Activated CD8-positive, alpha-beta T cell treated with anti-CD3 and anti-CD28 coated beads, Interleukin-2, amount 10 ng/mL, durations not matched to agents 7 days and 5 days (primary cell): ENCODE measurements at regions of chr1 and their contacts with region 1.

Region 1: DNA sequence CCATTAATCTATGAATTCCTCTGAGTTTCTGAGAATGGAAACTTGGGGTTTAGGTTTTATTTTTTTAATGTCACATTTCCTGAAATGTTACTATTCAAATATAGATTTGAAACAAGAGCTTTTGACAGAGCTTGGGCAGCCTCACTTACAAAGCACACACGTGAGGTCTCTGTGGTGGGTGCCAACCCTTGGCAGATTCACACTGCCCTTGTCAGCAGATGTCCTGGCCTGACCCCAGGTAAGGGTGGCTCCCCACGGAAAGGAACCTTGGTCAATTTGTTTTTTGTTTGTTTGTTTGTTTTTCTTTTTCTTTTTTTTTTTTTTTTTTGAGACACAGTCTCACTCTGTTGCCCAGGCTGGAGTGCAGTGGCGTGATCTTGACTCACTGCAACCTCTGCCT is 53.5 kb downstream of the FAAP20 start:
- DNase-seq: no peak
- ATAC-seq: no peak
- H3K4me3 Mint-ChIP-seq: no peak overlapping the region
- H3K27ac Mint-ChIP-seq: no peak overlapping the region
- H3K4me1 Mint-ChIP-seq: peaks cover 32% of the 10 kb centered on the region
- H3K27me3 Mint-ChIP-seq: no peaks in the 10 kb centered on the region

Region 2: DNA sequence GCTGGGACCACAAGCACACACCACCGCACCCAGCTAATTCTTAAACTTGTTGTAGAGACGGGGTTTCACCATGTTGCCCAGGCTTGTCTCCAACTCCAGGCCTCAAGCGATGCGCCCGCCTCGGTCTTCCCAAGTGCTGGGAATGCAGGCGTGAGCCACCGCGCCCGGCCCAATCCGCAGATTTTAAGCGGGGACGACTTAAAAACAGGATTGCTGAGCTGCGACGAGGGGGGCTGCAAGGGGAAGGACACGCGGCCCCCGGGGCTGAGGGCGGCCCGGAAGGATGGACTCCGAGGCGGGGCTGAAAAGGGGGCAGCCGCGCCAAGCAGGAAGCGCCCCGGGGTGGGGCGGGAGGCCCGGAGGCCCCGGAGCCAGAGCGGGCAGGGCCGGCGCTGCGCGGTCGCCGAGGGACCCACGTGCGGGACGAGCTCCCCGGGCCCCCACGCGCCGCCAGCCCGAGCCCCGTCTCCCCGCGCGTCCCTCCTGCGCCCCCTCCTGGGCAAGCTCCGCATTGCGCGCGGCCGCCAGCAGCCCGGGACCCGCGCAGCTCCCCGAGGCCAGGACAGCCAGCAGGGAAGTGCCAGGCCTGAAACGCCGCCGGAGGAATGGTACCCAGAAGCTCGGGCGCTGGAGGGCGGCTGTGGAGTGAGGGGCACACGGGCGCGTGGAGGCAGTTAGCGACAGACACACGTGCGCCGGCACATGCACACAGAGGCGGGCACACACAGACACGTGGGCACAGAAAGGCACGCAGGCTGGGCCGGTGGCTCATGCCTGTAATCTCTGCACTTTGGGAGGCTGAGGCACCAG is 96.3 kb before region 1 on chr1:
- CTCF ChIA-PET with region 1: no interaction called
- POLR2A ChIA-PET with region 1: no interaction called
- DNase-seq: peak; percentile 77
- ATAC-seq: peak; percentile 87
- H3K4me3 Mint-ChIP-seq: peak overlapping the region; percentile 42
- H3K27ac Mint-ChIP-seq: no peak overlapping the region
- H3K4me1 Mint-ChIP-seq: peaks cover 24% of the 10 kb centered on the region
- H3K27me3 Mint-ChIP-seq: peaks cover 12% of the 10 kb centered on the region

Region 3: DNA sequence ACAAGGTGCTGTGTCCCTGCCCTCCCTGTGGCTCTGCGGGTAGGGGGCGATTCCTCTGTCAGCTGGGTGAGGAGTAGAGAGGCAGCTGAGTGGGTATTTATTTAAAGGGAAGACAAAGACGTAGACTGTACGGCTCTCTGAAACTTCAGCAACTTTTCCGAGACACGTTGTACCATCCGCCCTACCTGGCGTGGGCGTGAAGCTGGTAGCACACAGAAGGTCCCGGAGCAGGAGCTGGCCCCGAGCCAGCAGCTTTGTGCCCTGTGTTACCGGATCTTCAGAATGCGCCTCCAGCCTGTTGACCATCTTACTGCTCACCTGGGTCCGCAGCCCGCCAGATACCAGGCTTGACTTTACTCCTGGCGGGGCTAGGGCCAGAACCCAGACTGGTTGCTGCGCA is 56.0 kb before region 1 on chr1:
- CTCF ChIA-PET with region 1: no interaction called
- POLR2A ChIA-PET with region 1: no interaction called
- DNase-seq: no peak
- ATAC-seq: no peak
- H3K4me3 Mint-ChIP-seq: no peak overlapping the region
- H3K27ac Mint-ChIP-seq: no peak overlapping the region
- H3K4me1 Mint-ChIP-seq: no peaks in the 10 kb centered on the region
- H3K27me3 Mint-ChIP-seq: no peaks in the 10 kb centered on the region

Region 4: DNA sequence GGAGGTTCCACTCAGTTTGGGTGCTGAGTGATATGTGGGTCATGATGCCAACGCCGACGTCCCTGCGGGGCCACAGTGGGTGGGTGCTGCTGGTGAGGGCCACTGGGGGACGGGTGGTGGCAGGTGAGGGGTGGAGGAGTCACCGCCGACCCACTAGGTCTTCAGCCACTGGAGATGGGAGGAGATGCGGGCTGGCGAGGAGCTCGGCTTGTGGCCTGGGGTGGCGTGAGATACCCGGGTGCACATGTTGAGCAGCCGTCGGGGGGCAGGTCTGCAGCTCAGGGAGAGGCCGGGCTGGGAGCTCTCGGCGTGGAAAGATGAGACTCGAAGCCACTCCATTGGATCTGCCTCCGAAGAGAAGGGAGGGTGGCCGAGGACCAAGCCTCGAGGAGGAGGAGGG is 13.0 kb after region 1 on chr1:
- CTCF ChIA-PET with region 1: interaction called, 59 read pairs
- POLR2A ChIA-PET with region 1: no interaction called
- DNase-seq: no peak
- ATAC-seq: no peak
- H3K4me3 Mint-ChIP-seq: no peak overlapping the region
- H3K27ac Mint-ChIP-seq: no peak overlapping the region
- H3K4me1 Mint-ChIP-seq: peaks cover 26% of the 10 kb centered on the region
- H3K27me3 Mint-ChIP-seq: no peaks in the 10 kb centered on the region

Region 5: DNA sequence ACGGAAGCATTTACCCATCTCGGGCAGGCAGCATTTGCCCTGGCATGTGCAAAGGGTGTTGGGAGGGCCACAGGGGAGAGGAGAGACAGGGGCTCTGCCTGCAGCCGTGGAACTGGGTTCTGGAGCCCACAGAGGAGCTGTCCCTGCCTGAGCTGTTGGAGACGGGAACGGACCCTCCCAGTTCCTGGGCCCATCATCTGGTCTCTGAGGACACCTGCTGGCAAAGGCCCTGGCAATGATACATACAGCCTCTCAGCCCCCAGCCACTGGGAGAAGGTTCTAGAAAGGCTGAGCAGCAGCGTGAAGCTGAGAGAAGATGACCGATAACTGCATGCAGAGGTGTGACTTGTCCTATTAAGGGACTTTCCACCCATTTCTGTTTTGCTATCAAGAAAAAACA is 22.2 kb after region 1 on chr1:
- CTCF ChIA-PET with region 1: interaction called, 11 read pairs
- POLR2A ChIA-PET with region 1: no interaction called
- DNase-seq: peak; percentile 29
- ATAC-seq: no peak
- H3K4me3 Mint-ChIP-seq: no peak overlapping the region
- H3K27ac Mint-ChIP-seq: peak overlapping the region; percentile 73
- H3K4me1 Mint-ChIP-seq: peaks cover 9% of the 10 kb centered on the region
- H3K27me3 Mint-ChIP-seq: no peaks in the 10 kb centered on the region